AG04449 (cell line): ENCODE measurements at regions of chr1 and their contacts with region 1.

Region 1: GRCh38 chr1:9867408-9868243 is 42.4 kb downstream of the CTNNBIP1 start:
- DNase-seq: no peak
- H3K4me3 ChIP-seq: no peak overlapping the region
- CTCF ChIP-seq: peak; percentile 97

Region 2: DNA sequence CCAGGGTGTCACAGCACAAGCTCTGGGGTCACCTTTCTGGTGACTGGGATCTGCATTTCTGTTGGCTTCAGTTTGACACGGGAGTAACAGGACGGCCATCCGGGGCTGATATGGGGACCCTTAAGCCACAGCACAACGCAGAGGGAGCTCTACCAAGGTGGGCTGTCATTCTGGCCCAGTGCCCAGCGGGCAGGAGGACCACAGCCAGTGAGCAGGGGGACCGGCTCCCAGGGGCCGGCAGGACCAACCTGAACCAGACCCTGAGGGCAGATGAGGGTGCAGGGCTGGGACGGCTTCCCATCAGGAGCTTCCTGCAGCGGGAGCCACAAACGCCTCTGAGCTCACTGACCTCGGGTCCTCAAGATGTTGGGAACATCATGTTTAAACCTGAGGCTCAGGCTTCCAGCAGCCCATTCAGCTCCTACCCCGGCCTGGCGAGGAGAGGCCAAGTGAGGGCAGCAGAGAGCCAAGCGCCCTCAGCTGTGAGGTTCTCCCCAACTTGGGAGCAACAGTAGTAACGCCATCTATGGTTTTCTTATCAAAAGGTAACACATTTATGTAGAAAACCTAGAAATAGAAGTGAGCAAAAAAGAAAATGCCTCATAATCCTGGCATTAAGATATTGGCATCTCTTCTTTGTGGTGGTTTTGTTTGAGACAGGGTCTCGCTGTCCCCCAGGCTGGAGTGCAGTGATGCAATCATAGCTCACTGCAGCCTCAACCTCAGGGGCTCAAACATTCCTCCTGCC is 252.1 kb before region 1 on chr1:
- CTCF ChIA-PET with region 1: interaction called, 10 read pairs
- POLR2A ChIA-PET with region 1: no interaction called
- DNase-seq: no peak
- H3K4me3 ChIP-seq: no peak overlapping the region
- CTCF ChIP-seq: peak; percentile 81

Region 3: GRCh38 chr1:9724706-9725476 is 142.7 kb before region 1 on chr1:
- CTCF ChIA-PET with region 1: interaction called, 11 read pairs
- POLR2A ChIA-PET with region 1: no interaction called
- DNase-seq: no peak
- H3K4me3 ChIP-seq: no peak overlapping the region
- CTCF ChIP-seq: peak; percentile 92

Region 4: DNA sequence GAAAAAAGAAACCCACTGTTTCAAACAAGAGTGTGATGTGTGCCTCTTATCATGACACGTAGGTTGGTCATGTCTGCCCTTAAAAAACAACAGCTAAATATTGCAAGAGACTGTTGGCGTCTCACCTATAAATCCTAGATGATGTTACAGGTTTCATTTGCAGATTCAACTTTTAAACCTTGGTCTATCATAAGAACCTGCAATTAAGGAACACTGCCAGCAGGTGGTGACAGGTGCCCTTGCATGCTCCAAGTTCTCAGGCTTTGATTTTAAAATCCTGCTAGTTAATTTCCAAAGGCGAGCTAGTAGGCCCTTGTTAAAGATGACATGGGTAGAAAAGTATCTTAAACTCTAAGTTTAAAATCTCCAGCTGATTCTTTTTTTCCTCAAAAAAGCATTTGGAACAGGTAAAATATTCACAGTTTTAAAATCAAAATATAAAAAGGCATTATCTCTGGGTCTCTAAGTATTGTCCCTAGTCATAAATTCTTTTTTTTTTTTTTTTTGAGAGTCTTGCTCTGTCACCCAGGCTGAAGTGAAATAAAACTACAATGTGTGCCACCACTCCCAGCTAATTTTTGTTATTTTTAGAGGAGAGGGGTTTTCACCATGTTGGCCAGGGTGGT is 83.0 kb before region 1 on chr1:
- CTCF ChIA-PET with region 1: interaction called, 75 read pairs
- POLR2A ChIA-PET with region 1: no interaction called
- DNase-seq: no peak
- H3K4me3 ChIP-seq: no peak overlapping the region
- CTCF ChIP-seq: peak; percentile 56

Region 5: GRCh38 chr1:9852410-9853248 is 15.0 kb before region 1 on chr1:
- CTCF ChIA-PET with region 1: interaction called, 502 read pairs
- POLR2A ChIA-PET with region 1: no interaction called
- DNase-seq: no peak
- H3K4me3 ChIP-seq: no peak overlapping the region
- CTCF ChIP-seq: no peak

Region 6: GRCh38 chr1:9914610-9914937 is 46.9 kb after region 1 on chr1:
- CTCF ChIA-PET with region 1: interaction called, 63 read pairs
- POLR2A ChIA-PET with region 1: no interaction called
- DNase-seq: no peak
- H3K4me3 ChIP-seq: no peak overlapping the region
- CTCF ChIP-seq: no peak

Region 7: DNA sequence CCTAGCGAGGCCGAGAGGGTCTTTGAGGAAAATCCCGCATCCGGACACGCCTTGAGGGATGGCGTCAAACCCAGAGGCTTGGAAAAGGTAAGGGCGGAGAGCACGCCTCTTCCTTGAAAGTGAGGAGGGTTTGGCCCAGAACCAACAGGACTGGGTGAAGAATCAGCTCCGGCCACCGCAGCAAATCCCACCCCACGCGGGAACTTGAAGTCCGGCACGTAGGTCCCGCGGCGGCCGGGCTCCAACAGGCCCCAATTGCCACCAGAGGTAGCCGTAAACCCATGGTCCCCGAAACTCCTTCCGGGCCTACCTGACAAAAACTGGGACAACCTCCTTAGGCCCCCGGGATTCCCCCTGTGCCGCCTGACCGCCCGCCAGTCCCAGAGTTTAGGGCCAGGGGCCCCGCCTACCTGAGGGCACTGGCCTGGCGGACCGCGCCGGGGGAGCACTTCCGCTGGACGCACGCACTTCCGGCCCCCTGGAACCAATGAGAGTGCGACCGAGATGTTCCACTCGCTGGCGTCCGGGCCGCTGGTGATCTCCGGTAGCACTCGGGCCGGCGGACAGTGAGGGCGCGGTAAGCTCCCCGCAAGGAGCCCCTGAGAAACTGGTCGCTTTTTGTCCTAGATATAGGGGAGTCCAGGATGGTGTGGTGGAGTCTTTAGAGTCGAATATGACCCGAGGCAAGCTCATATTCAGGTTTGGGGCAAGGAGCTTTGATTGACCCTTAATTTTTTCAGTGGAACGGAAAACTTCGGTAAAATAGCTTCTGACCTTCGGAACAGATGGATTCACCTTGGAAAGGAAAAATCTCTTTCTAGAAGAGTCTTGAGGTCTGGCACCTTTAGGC is 75.5 kb after region 1 on chr1 and contains the starts of genes LZIC and NMNAT1:
- CTCF ChIA-PET with region 1: interaction called, 187 read pairs
- POLR2A ChIA-PET with region 1: interaction called, 6 read pairs
- DNase-seq: peak; percentile 57
- H3K4me3 ChIP-seq: peak within 1 kb of the TSS; percentile 92
- CTCF ChIP-seq: no peak